CD4-positive, alpha-beta T cell (primary cell): ENCODE measurements at regions of chr2 and their contacts with region 1.

Region 1: DNA sequence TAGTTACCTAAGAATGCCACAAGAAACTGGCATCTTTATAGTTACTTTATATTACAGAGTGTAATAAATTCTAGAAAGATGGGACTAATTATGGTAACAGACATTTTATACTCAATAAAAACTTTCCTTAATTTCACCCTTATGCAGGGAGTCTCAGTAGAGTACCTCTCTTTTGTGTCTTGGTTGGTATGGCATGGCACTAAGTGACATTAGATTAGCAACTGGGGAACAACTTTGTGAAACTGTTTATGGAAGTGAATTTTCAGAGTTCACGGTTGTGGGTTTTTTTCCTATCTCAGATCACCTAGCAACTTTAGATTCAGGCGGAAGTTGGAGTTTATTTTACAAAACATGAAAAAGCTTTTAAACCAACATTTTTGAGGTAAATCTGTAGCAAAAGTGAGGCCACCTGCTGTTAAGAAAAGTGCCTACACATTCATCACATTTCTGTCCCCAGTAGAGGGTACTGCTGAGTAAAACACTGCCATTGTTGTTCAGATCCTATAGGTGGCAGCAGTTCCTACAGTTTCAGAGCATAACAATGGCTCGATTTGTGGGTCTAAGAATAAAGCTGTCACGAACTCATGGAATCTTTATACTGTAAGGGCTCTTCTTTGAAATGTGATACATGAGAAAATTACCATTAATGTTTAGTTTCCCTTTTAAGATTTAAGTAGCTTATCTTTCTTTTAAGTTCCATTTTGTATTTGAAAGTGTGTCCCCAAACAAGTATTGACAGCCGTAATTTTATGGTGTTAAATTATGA is 117.6 kb downstream of the CAMKMT start:
- DNase-seq: peak in 10 of 14 experiments; percentile 1 to 82 (median 22)
- ATAC-seq: peak; percentile 100
- H3K4me3 ChIP-seq: no peak overlapping the region
- H3K4me3 Mint-ChIP-seq: no peak overlapping the region
- H3K27ac ChIP-seq: no peak overlapping the region
- H3K27ac Mint-ChIP-seq: peak overlapping the region; percentile 27
- H3K4me1 ChIP-seq: no peaks in the 10 kb centered on the region
- H3K4me1 Mint-ChIP-seq: peaks cover 9% of the 10 kb centered on the region
- H3K27me3 ChIP-seq: no peaks in the 10 kb centered on the region
- H3K27me3 Mint-ChIP-seq: no peaks in the 10 kb centered on the region
- CTCF ChIP-seq: peak; percentile 100

Region 2: GRCh38 chr2:43985359-43985758 is 493.9 kb before region 1 on chr2:
- CTCF ChIA-PET with region 1: no interaction called
- POLR2A ChIA-PET with region 1: no interaction called
- intact Hi-C with region 1: no loop called
- DNase-seq: no peak
- ATAC-seq: no peak
- H3K4me3 ChIP-seq: no peak overlapping the region
- H3K4me3 Mint-ChIP-seq: no peak overlapping the region
- H3K27ac ChIP-seq: no peak overlapping the region
- H3K27ac Mint-ChIP-seq: no peak overlapping the region
- H3K4me1 ChIP-seq: no peaks in the 10 kb centered on the region
- H3K4me1 Mint-ChIP-seq: peaks cover 30% of the 10 kb centered on the region
- H3K27me3 ChIP-seq: no peaks in the 10 kb centered on the region
- H3K27me3 Mint-ChIP-seq: no peaks in the 10 kb centered on the region
- CTCF ChIP-seq: no peak

Region 3: GRCh38 chr2:44044281-44044720 is 435.0 kb before region 1 on chr2:
- CTCF ChIA-PET with region 1: interaction called, 4 read pairs
- POLR2A ChIA-PET with region 1: no interaction called
- intact Hi-C with region 1: loop called (anchors 5 kb)
- DNase-seq: peak; percentile 60 to 84 (median 70)
- ATAC-seq: peak; percentile 99
- H3K4me3 ChIP-seq: no peak overlapping the region
- H3K4me3 Mint-ChIP-seq: no peak overlapping the region
- H3K27ac ChIP-seq: no peak overlapping the region
- H3K27ac Mint-ChIP-seq: no peak overlapping the region
- H3K4me1 ChIP-seq: peaks cover 6% of the 10 kb centered on the region
- H3K4me1 Mint-ChIP-seq: no peaks in the 10 kb centered on the region
- H3K27me3 ChIP-seq: peaks cover 0 to 2% of the 10 kb centered on the region in 2 experiments
- H3K27me3 Mint-ChIP-seq: no peaks in the 10 kb centered on the region
- CTCF ChIP-seq: peak; percentile 90

Region 4: GRCh38 chr2:44087036-44087713 is 392.1 kb before region 1 on chr2:
- CTCF ChIA-PET with region 1: interaction called, 4 read pairs
- POLR2A ChIA-PET with region 1: no interaction called
- intact Hi-C with region 1: loop called (anchors 5 kb)
- DNase-seq: peak; percentile 68 to 90 (median 80)
- ATAC-seq: peak; percentile 94
- H3K4me3 ChIP-seq: peak overlapping the region; percentile 48
- H3K4me3 Mint-ChIP-seq: peak overlapping the region; percentile 87
- H3K27ac ChIP-seq: no peak overlapping the region
- H3K27ac Mint-ChIP-seq: peak overlapping the region; percentile 79
- H3K4me1 ChIP-seq: peaks cover 9% of the 10 kb centered on the region
- H3K4me1 Mint-ChIP-seq: peaks cover 11% of the 10 kb centered on the region
- H3K27me3 ChIP-seq: no peaks in the 10 kb centered on the region
- H3K27me3 Mint-ChIP-seq: no peaks in the 10 kb centered on the region
- CTCF ChIP-seq: peak; percentile 95

Region 5: GRCh38 chr2:44462934-44463849 is 16.1 kb before region 1 on chr2:
- CTCF ChIA-PET with region 1: interaction called, 12 read pairs
- POLR2A ChIA-PET with region 1: interaction called, 3 read pairs
- intact Hi-C with region 1: no loop called
- DNase-seq: no peak
- ATAC-seq: no peak
- H3K4me3 ChIP-seq: no peak overlapping the region
- H3K4me3 Mint-ChIP-seq: no peak overlapping the region
- H3K27ac ChIP-seq: no peak overlapping the region
- H3K27ac Mint-ChIP-seq: no peak overlapping the region
- H3K4me1 ChIP-seq: no peaks in the 10 kb centered on the region
- H3K4me1 Mint-ChIP-seq: no peaks in the 10 kb centered on the region
- H3K27me3 ChIP-seq: no peaks in the 10 kb centered on the region
- H3K27me3 Mint-ChIP-seq: no peaks in the 10 kb centered on the region
- CTCF ChIP-seq: no peak

Region 6: GRCh38 chr2:44490726-44491125 is 11.4 kb after region 1 on chr2:
- CTCF ChIA-PET with region 1: interaction called, 13 read pairs
- POLR2A ChIA-PET with region 1: interaction called, 3 read pairs
- intact Hi-C with region 1: no loop called
- DNase-seq: no peak
- ATAC-seq: no peak
- H3K4me3 ChIP-seq: no peak overlapping the region
- H3K4me3 Mint-ChIP-seq: no peak overlapping the region
- H3K27ac ChIP-seq: no peak overlapping the region
- H3K27ac Mint-ChIP-seq: no peak overlapping the region
- H3K4me1 ChIP-seq: no peaks in the 10 kb centered on the region
- H3K4me1 Mint-ChIP-seq: no peaks in the 10 kb centered on the region
- H3K27me3 ChIP-seq: no peaks in the 10 kb centered on the region
- H3K27me3 Mint-ChIP-seq: no peaks in the 10 kb centered on the region
- CTCF ChIP-seq: no peak